Sciatic nerve (tissue), 2 donors: ENCODE measurements at regions of chr22 and their contacts with region 1.

Region 1: DNA sequence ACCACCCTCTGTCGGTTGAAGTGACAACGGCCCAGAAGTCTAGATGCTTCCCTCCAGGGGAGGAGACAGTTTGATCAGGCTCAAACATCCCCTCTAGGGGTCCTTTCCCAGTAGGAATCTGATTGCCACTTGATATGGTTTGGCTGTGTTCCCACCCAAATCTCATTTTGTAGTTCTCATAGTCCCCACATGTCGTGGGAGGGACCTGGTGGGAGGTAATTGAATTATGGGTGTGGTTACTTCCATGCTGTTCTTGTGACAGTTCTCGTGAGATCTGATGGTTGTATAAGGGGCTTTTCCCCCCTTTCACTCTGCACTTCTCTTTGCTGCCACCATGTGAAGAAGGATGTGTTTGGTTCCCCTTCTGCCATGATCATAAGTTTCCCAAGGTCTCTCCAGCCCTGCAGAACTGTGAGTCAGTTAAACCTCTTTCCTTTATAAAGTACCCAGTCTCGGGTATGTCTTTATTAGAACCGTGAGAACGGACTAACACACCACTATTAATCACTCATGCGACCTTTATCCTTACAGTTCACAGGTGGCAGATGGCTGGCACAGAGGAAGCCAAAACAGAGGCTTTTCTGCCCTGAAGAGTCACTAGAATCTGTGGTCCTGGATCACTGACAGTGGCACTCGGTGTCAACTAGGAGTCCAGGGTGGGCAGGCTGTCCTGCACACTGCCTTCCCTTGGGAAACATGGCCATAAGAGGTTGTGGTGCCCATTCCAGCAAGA is 21.6 kb downstream of the ASPHD2 start:
- DNase-seq: no peak
- ATAC-seq: no peak

Region 2: GRCh38 chr22:26398741-26399153 is 51.9 kb before region 1 on chr22:
- intact Hi-C with region 1: loop called (anchors 10 kb)
- DNase-seq: peak; percentile 66
- ATAC-seq: peak; percentile 83